A673 (cell line): ENCODE measurements at regions of chr10 and their contacts with region 1.

Region 1: GRCh38 chr10:95363303-95363912 is 72.6 kb upstream of the PDLIM1 start:
- DNase-seq: peak; percentile 70
- H3K4me3 ChIP-seq: no peak overlapping the region
- H3K27ac ChIP-seq: no peak overlapping the region
- H3K4me1 ChIP-seq: no peaks in the 10 kb centered on the region
- H3K27me3 ChIP-seq: peaks cover 4% of the 10 kb centered on the region
- CTCF ChIP-seq: peak; percentile 89

Region 2: DNA sequence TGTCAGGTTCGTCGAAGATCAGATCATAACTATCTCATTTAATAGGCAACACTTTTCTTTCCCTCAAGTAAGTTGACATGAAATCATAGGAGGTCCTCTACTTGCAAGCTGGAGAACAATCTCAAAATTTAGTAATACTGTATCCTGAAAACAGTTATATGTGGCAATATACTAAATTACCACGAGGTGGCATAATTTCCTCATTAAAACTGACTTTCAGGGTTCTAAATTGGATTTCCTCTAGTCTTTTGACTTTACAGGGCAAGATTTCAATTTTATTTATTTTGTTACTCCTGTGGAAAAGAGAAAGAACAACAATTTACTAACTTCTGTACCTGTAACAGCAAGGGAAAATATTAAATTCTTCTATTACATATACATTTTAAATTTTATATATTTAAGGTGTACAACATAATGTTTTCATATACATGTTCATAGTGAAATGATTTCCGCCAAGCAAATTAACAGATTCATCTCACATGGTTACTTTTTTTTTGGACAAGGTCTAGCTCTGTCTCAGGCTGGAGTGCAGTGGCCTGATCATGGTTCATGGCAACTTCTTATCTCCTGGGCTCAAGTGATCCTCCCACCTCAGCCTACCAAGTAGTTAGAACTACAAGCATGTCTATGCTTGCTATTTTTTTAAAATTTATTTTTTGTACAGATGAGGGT is 733.3 kb before region 1 on chr10:
- CTCF ChIA-PET with region 1: no interaction called
- POLR2A ChIA-PET with region 1: no interaction called
- intact Hi-C with region 1: loop called (anchors 1 kb)
- DNase-seq: peak; percentile 49
- H3K4me3 ChIP-seq: no peak overlapping the region
- H3K27ac ChIP-seq: no peak overlapping the region
- H3K4me1 ChIP-seq: no peaks in the 10 kb centered on the region
- H3K27me3 ChIP-seq: no peaks in the 10 kb centered on the region
- CTCF ChIP-seq: peak; percentile 72

Region 3: DNA sequence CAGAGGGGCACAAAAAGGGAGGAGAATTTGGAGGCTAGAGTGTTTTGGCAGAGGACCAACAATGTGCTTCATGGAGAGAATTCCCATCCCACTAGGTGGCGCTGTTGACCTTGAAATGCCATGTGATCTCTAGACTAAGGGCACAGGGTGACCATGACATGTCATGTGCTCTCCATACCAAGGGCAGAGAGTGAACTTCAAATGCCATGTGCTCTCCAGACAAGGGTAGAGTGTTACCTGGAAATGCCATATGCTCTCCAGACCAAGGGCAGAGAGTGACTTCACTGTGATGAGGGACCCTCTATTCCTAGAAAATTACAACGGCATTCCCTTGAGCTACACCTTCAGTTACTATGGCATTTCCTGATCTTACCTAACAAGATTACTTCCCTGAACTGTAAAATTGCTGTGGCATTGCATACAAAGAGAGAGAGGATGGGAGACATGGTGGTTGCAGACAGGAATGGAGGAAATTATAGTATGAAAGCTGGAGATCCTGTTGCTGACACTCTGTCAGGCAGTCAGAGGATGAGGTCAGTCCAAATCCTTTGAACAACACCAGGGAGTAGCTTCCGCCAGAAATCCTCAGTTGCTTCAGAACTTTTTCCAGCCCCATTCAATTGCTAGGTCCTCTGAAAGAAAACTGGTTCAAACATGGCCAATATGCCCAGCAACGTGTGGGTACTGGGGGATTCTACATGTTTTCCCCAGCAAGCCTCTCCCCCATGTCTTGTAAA is 230.2 kb before region 1 on chr10:
- CTCF ChIA-PET with region 1: interaction called, 10 read pairs
- POLR2A ChIA-PET with region 1: no interaction called
- intact Hi-C with region 1: loop called (anchors 1 kb)
- DNase-seq: peak; percentile 84
- H3K4me3 ChIP-seq: no peak overlapping the region
- H3K27ac ChIP-seq: no peak overlapping the region
- H3K4me1 ChIP-seq: no peaks in the 10 kb centered on the region
- H3K27me3 ChIP-seq: no peaks in the 10 kb centered on the region
- CTCF ChIP-seq: peak; percentile 77

Region 4: DNA sequence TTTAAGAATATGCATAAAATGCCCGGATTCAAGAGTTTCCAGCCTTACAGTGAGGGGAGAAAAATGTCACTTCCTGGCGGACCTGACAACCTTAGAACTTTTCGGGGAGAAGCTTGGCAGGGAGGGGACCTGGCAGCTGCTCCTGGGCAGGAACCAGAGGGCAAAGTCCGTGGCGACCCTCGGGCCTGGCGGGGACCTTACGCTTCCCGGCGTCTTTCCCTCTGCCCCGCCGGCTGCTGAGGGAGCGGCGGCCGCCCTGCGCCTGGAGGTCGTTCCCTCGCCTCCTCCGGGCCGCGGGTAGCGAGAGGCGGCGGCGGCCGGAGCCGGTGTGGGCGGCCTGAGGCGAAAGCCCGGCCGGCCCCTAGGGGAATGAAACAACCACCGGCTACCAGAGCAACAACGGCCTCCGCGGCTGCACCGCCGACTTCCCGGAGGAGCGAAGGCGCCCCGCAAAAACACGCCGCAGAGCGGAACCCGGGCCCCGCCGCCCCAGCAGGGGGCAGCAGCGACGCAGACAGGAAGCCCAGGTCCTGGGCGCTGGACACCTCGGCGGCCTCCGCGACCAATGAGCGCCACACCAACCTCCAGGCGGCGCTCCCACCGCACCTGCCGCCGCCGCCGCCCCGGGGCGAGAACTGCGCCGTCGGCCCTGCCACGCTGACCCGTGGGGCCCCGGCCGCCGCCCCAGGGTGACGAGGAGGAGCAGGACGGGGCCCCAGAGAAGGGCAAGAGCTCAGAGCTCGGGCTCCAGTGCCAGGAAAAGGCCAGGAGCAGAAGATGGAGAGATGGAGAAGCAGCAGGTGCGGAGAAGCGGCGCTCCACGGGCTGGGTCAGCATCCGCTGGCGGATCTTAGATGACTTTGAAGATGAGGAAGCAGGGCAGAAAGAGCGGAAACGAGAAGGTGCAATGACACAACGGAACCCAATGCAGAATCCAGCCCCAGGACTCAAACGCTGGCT is 179.9 kb before region 1 on chr10:
- CTCF ChIA-PET with region 1: interaction called, 3 read pairs
- POLR2A ChIA-PET with region 1: no interaction called
- intact Hi-C with region 1: loop called (anchors 5 kb)
- DNase-seq: peak; percentile 57
- H3K4me3 ChIP-seq: peak overlapping the region; percentile 40
- H3K27ac ChIP-seq: no peak overlapping the region
- H3K4me1 ChIP-seq: no peaks in the 10 kb centered on the region
- H3K27me3 ChIP-seq: peaks cover 57% of the 10 kb centered on the region
- CTCF ChIP-seq: peak; percentile 64

Region 5: GRCh38 chr10:95327367-95327766 is 36.0 kb before region 1 on chr10:
- CTCF ChIA-PET with region 1: no interaction called
- POLR2A ChIA-PET with region 1: no interaction called
- intact Hi-C with region 1: no loop called
- DNase-seq: peak; percentile 6
- H3K4me3 ChIP-seq: no peak overlapping the region
- H3K27ac ChIP-seq: no peak overlapping the region
- H3K4me1 ChIP-seq: no peaks in the 10 kb centered on the region
- H3K27me3 ChIP-seq: peaks cover 7% of the 10 kb centered on the region
- CTCF ChIP-seq: no peak

Region 6: DNA sequence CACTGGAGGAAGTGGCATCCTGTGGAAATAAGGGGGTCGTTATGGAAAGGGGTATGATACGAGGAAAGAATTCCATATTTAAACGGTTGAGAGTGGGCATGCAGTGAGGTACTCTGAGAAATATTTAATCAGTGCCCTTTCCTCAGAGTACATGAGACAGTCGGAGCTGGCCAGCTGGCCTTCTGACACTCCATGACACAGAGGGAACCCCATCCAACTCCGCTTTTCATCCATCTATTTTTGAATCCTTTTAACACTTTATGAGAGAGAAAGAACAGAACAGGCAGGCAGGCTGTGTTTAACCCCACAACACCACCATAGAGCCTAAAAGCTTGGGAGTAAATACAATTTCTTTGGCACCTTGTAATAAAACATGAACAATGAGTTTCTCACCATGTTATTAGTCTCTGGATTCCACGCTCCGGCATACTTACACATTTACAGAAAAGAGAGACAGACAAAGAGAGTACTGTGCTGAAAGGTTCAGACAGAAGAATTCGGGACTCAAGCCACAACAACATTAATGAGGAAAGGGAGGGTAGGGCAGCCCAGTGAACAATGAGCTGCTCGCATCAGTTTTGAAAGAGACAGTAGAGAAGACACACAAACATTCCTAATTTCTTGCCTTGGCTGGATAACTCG is 51.6 kb after region 1 on chr10:
- CTCF ChIA-PET with region 1: no interaction called
- POLR2A ChIA-PET with region 1: no interaction called
- intact Hi-C with region 1: no loop called
- DNase-seq: no peak
- H3K4me3 ChIP-seq: no peak overlapping the region
- H3K27ac ChIP-seq: no peak overlapping the region
- H3K4me1 ChIP-seq: no peaks in the 10 kb centered on the region
- H3K27me3 ChIP-seq: no peaks in the 10 kb centered on the region
- CTCF ChIP-seq: no peak